Right ventricle myocardium inferior (tissue), 1 donor: ENCODE measurements at regions of chr19 and their contacts with region 1.

Region 1: GRCh38 chr19:46860125-46860845 is 512 bp upstream of the ARHGAP35 start:
- DNase-seq: peak; percentile 99
- ATAC-seq: peak; percentile 91

Region 2: DNA sequence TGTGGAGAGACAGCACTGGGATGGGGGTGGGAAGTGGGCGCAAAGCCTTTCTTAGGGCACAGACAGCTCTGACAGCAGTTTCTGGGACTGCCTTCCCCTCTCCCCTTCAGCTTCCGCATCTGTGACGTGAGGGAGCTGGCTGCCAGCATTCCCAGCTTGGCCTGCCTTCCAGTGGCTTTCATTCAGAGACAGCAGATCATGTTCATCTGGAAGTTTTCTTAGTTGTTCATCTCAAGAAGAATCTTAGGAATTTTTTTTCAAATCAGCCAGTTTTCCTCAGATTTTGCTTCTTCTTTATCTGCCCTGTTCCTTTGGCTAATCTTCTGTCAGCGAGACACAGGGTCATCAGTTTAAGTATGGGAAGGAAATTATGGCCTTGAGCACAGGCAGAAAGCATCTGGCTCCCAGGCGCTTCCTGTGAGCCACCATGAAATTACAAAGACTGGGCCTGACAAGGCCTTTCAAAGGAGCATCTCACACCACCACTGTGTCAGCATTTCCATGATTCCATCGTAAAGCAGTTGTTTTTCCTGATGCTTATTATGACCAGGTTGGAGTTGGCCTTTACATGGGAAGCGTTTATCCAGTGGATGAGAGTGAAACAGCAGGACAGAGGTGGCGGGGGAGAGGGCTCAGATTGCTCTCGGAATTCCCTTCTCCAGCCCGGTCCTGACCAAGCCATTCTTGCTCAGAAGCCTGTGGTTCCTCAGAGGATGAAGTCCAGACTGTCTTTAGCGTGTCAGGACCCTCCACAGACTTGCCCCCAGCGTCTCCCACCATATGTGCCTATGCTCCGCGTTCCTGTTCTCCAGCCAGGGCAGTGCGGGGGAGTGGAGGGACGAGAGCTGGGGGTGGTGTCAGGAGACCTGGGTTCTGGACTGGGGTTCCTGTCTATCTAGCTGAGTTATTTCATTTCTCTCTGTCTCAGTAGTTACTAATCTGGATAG is 44.1 kb after region 1 on chr19:
- intact Hi-C with region 1: loop called (anchors 5 kb)
- DNase-seq: no peak
- ATAC-seq: peak; percentile 51

Region 3: DNA sequence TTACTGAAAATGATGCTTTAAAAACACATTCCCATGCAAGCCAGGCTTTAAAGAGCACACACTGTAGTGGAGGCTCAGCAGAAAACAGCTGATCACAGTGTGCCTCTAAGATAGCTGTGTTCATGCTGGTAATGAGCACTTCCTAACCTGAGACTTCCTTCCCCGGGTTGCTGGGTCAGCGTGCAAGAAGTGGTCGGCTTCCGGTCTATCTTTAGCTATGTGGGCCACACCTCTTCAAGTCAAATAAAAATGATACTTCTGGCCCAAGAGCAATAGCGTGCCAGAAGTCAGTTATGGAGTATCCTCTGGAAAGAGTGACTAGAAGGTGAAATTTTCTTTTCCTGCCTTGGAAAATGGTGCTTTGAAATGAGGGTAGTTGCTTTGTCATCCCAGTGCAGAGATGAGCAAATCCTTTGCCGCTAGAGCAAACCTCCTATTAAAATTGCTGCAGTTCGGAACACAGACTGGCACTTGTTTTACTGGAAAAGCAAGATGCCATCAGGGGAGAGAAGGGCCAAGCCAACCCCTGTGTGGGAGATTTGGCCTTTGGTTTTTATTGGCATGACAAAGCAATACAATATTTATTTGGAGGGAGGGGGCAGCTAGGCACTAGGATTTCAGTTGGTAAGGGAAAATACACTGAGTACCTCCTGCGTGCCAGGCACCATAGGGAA is 64.7 kb after region 1 on chr19:
- intact Hi-C with region 1: loop called (anchors 5 kb)
- DNase-seq: no peak
- ATAC-seq: peak; percentile 41

Region 4: DNA sequence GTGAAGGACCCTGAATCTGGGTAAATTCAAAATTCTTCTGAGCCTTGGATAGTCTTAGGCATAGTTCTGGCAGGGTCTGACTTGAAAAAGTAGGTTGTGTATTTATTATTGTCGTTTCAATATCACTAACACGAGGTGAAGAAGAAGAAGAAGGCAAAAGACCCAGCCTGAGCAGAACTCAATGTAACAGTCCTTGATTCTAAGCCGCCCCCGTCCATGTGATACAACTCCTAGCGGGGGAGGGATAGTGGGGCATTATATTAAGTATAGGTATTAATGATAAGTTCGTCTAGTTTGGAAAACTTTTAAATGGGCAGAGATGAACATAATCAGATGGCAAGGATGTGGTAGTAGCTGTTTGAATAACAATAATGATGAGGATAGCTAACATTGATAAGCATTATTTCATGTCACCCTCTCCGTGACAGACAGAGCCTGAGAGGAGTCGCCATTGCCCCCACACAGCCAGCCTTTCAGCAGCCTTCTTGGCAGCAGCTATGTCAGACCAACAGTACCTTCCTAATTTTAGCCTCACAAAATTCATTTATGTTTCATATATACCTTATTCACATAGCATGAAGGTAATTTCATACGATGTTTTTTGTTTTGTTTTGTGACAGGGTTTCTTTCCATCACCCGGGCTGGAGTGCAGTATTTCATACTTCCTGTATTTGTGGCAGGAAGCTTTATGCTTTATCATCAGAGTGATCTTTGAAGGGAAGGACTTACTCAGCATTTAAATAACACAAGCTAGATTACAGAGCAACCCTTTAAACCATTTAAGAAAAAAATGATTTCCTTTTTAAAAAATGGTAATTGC is 94.9 kb after region 1 on chr19:
- intact Hi-C with region 1: no loop called
- DNase-seq: no peak
- ATAC-seq: no peak

Region 5: GRCh38 chr19:46990991-46991676 is 130.8 kb after region 1 on chr19:
- intact Hi-C with region 1: loop called (anchors 1 kb)
- DNase-seq: peak; percentile 83
- ATAC-seq: peak; percentile 83

Region 6: GRCh38 chr19:47112997-47113849 is 252.9 kb after region 1 on chr19 and contains the start of gene ZC3H4:
- intact Hi-C with region 1: loop called (anchors 5 kb)
- DNase-seq: peak; percentile 99
- ATAC-seq: peak; percentile 96
- total RNA-seq, gene ZC3H4: 20.5 TPM

Region 7: GRCh38 chr19:47256688-47257443 is 396.6 kb after region 1 on chr19:
- intact Hi-C with region 1: loop called (anchors 2 kb)
- DNase-seq: peak; percentile 100
- ATAC-seq: peak; percentile 87